ENCODE measurements at regions of chr6 and their contacts with region 1.

Region 1: GRCh38 chr6:117555882-117556498 is 46.3 kb downstream of the GOPC start:
- DNase-seq: peak; percentile 40
- H3K4me3 ChIP-seq: no peak overlapping the region
- H3K27ac ChIP-seq: no peak overlapping the region
- H3K27me3 ChIP-seq: no peaks in the 10 kb centered on the region
- CTCF ChIP-seq: peak; percentile 74

Region 2: GRCh38 chr6:117449549-117450439 is 106.2 kb before region 1 on chr6:
- in situ Hi-C with region 1: loop called (anchors 25 kb)
- DNase-seq: peak; percentile 76
- H3K4me3 ChIP-seq: no peak overlapping the region
- H3K27ac ChIP-seq: peak overlapping the region; percentile 96
- H3K27me3 ChIP-seq: no peaks in the 10 kb centered on the region
- CTCF ChIP-seq: peak; percentile 62